Psoas muscle (tissue), 8 donors: ENCODE measurements at regions of chr9 and their contacts with region 1.

Region 1: GRCh38 chr9:82010711-82011110 is 22.1 kb downstream of the SPATA31D1 start:
- DNase-seq: no peak
- ATAC-seq: no peak
- H3K4me3 ChIP-seq: no peak overlapping the region
- H3K27ac ChIP-seq: no peak overlapping the region
- H3K4me1 ChIP-seq: no peaks in the 10 kb centered on the region
- H3K27me3 ChIP-seq: no peaks in the 10 kb centered on the region
- CTCF ChIP-seq: no peak

Region 2: DNA sequence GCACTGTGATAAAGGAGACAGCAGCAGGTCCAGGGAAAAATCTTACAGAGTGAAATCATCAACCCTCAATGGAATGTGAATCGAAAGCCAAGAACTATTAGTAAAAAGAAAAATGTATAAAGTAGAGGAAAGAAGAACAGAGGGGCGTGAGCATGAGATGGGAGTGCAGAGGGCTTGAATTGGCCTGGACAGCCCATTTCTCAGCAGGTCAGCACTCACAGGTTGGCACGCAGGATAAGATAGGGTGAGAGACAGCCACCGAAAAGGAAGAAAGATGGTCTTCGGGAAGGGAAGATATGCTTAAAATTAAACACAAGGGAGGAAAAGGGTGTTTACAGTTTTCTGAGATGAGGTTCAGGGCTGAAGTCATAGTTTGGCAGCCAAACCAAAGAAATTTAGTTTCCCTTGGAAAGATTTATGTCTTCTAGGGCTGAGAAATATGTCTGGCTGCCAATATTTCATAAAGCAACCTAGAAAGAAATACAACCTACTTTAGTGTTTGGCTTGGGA is 502.6 kb after region 1 on chr9:
- intact Hi-C with region 1: loop called in 1 of 2 experiments (anchors 10 kb)
- DNase-seq: no peak
- ATAC-seq: peak in 1 of 4 donors; percentile 30
- H3K4me3 ChIP-seq: no peak overlapping the region
- H3K27ac ChIP-seq: no peak overlapping the region
- H3K4me1 ChIP-seq: no peaks in the 10 kb centered on the region
- H3K27me3 ChIP-seq: no peaks in the 10 kb centered on the region
- CTCF ChIP-seq: no peak